ENCODE measurements at regions of chr14 and their contacts with region 1.

Region 1: GRCh38 chr14:60665153-60665511 is 15.9 kb upstream of the SIX1 start:
- DNase-seq: no peak
- H3K4me3 Mint-ChIP-seq: no peak overlapping the region
- H3K27ac Mint-ChIP-seq: no peak overlapping the region
- H3K4me1 Mint-ChIP-seq: no peaks in the 10 kb centered on the region
- H3K27me3 Mint-ChIP-seq: no peaks in the 10 kb centered on the region
- CTCF ChIP-seq: no peak

Region 2: GRCh38 chr14:60680511-60680910 is 15.4 kb after region 1 on chr14:
- CTCF ChIA-PET with region 1: interaction called, 10 read pairs
- intact Hi-C with region 1: no loop called
- DNase-seq: no peak
- H3K4me3 Mint-ChIP-seq: no peak overlapping the region
- H3K27ac Mint-ChIP-seq: no peak overlapping the region
- H3K4me1 Mint-ChIP-seq: no peaks in the 10 kb centered on the region
- H3K27me3 Mint-ChIP-seq: no peaks in the 10 kb centered on the region
- CTCF ChIP-seq: no peak

Region 3: GRCh38 chr14:60724137-60724619 is 59.0 kb after region 1 on chr14 and contains the start of gene SIX4:
- CTCF ChIA-PET with region 1: no interaction called
- intact Hi-C with region 1: no loop called
- DNase-seq: peak; percentile 75
- H3K4me3 Mint-ChIP-seq: peak within 1 kb of the TSS; percentile 92
- H3K27ac Mint-ChIP-seq: peak within 1 kb of the TSS; percentile 87
- H3K4me1 Mint-ChIP-seq: peaks cover 11% of the 10 kb centered on the region
- H3K27me3 Mint-ChIP-seq: no peaks in the 10 kb centered on the region
- CTCF ChIP-seq: no peak
- total RNA-seq, gene SIX4: 20.9 and 22.8 TPM in 2 replicates